ENCODE measurements at regions of chr1 and their contacts with region 1.

Region 1: GRCh38 chr1:212035123-212035834 is at the starts of genes DTL and INTS7:
- DNase-seq: peak; percentile 99
- H3K4me3 ChIP-seq: peak within 1 kb of the TSS; percentile 70 to 94 (median 78)
- H3K27ac ChIP-seq: peak within 1 kb of the TSS; percentile 71
- H3K4me1 ChIP-seq: peaks cover 36% of the 10 kb centered on the region
- H3K27me3 ChIP-seq: no peaks in the 10 kb centered on the region
- CTCF ChIP-seq: peak; percentile 90 to 95
- POLR2A ChIP-seq: peak; percentile 76
- total RNA-seq, gene DTL: 26.5 and 27.2 TPM in 2 replicates
- total RNA-seq, gene INTS7: 16.1 and 18.1 TPM in 2 replicates

Region 2: DNA sequence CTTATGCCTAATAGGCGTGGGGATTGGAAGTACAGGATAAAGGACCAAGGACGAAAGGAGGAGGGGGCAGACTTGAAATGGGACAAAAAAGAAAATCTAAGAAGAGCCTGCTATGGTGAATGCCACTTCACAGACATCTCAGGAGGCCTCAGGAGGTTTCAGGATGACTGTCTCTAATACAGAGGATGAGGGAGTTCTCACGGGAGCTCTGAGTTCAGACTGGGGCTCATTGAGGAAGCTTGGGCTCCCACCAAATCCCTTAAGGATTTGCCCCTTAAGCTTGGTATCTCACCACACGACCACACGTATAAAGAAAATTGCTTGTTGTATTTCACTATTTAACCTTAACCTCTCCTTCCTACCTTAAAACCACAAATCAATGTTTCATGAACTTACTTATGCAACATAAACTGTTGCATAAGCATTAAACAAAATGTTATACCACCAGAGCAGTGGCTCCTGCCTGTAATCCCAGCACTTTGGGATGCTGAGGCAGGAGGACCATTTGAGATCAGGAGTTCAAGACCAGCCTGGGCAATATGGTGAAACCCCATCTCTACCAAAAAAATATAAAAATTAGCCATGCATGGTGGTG is 468.8 kb before region 1 on chr1:
- CTCF ChIA-PET with region 1: no interaction called
- POLR2A ChIA-PET with region 1: no interaction called
- dilution Hi-C with region 1: no loop called
- intact Hi-C with region 1: no loop called
- DNase-seq: no peak
- H3K4me3 ChIP-seq: no peak overlapping the region
- H3K27ac ChIP-seq: no peak overlapping the region
- H3K4me1 ChIP-seq: no peaks in the 10 kb centered on the region
- H3K27me3 ChIP-seq: no peaks in the 10 kb centered on the region
- CTCF ChIP-seq: no peak
- POLR2A ChIP-seq: no peak

Region 3: GRCh38 chr1:211680752-211681327 is 354.4 kb before region 1 on chr1:
- CTCF ChIA-PET with region 1: interaction called, 148 read pairs
- POLR2A ChIA-PET with region 1: interaction called, 3 read pairs
- dilution Hi-C with region 1: no loop called
- intact Hi-C with region 1: loop called (anchors 1 kb)
- DNase-seq: peak; percentile 86
- H3K4me3 ChIP-seq: no peak overlapping the region
- H3K27ac ChIP-seq: no peak overlapping the region
- H3K4me1 ChIP-seq: peaks cover 3% of the 10 kb centered on the region
- H3K27me3 ChIP-seq: peaks cover 0 to 2% of the 10 kb centered on the region in 2 experiments
- CTCF ChIP-seq: peak; percentile 59 to 66
- POLR2A ChIP-seq: no peak

Region 4: GRCh38 chr1:211752951-211753486 is 282.3 kb before region 1 on chr1:
- CTCF ChIA-PET with region 1: no interaction called
- POLR2A ChIA-PET with region 1: no interaction called
- dilution Hi-C with region 1: no loop called
- intact Hi-C with region 1: no loop called
- DNase-seq: no peak
- H3K4me3 ChIP-seq: no peak overlapping the region
- H3K27ac ChIP-seq: no peak overlapping the region
- H3K4me1 ChIP-seq: no peaks in the 10 kb centered on the region
- H3K27me3 ChIP-seq: no peaks in the 10 kb centered on the region
- CTCF ChIP-seq: no peak
- POLR2A ChIP-seq: no peak

Region 5: GRCh38 chr1:211965108-211965805 is 70.0 kb before region 1 on chr1:
- CTCF ChIA-PET with region 1: interaction called, 3 read pairs
- POLR2A ChIA-PET with region 1: interaction called, 3 read pairs
- dilution Hi-C with region 1: no loop called
- intact Hi-C with region 1: loop called (anchors 1 kb)
- DNase-seq: no peak
- H3K4me3 ChIP-seq: no peak overlapping the region
- H3K27ac ChIP-seq: no peak overlapping the region
- H3K4me1 ChIP-seq: no peaks in the 10 kb centered on the region
- H3K27me3 ChIP-seq: no peaks in the 10 kb centered on the region
- CTCF ChIP-seq: no peak
- POLR2A ChIP-seq: no peak

Region 6: DNA sequence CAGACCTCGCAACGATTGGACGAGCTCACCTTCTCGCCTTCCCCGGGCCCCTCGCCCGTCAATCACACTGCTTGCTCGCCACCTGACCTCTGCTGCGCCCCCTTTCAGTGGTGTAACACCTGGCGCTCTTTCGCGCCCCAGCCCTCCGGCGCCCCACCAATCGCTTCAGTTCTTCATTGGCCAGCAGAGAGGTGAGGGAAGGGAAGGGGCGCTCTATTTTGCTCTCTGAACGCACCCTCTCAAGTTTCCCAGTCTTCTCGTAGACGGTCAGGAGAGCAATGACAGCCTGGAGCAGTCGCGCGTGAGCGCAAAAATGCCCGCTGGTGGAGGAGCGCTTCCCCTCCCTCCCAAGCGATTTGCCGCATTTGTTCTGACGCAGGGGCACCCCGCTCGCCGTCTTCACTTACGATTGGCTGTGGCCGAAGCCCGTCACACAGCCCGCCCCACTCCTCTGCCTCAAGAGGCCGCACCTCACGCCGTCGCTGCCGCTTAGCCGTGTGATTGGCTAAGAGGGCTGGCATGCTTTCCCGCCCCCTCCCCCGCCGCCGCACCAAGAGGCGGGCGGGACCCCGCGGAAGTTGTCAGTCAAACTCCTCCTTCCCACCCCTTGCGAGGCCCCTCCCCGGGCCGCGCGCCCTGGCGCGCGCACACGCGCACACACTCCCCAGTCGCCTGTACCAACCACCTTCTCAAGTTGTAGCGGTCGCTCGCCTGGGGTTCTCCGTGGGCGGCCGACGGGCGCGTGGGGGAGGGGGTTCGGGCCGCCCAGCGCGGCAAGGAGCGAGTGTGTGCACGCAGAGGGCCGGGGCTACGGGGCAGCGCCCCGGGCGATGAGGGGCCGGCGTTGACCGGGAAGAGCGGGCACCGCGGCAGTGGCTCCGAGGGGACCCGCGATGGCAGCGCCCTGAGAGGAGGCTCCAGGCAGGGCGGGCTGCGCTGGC is 249.7 kb after region 1 on chr1 and contains the start of gene PPP2R5A:
- CTCF ChIA-PET with region 1: interaction called, 6 read pairs
- POLR2A ChIA-PET with region 1: no interaction called
- dilution Hi-C with region 1: no loop called
- intact Hi-C with region 1: loop called (anchors 1 kb)
- DNase-seq: peak; percentile 100
- H3K4me3 ChIP-seq: peak within 1 kb of the TSS; percentile 63 to 86 (median 85)
- H3K27ac ChIP-seq: peak within 1 kb of the TSS; percentile 44
- H3K4me1 ChIP-seq: peaks cover 19% of the 10 kb centered on the region
- H3K27me3 ChIP-seq: no peaks in the 10 kb centered on the region
- CTCF ChIP-seq: peak in 1 of 2 donors; percentile 15
- POLR2A ChIP-seq: peak; percentile 53
- total RNA-seq, gene PPP2R5A: 27.7 and 34.5 TPM in 2 replicates

Region 7: GRCh38 chr1:212432706-212433576 is 397.7 kb after region 1 on chr1 and contains the start of gene NENF:
- CTCF ChIA-PET with region 1: no interaction called
- POLR2A ChIA-PET with region 1: no interaction called
- dilution Hi-C with region 1: no loop called
- intact Hi-C with region 1: loop called (anchors 1 kb)
- DNase-seq: peak; percentile 59
- H3K4me3 ChIP-seq: peak within 1 kb of the TSS; percentile 26 to 58 (median 53)
- H3K27ac ChIP-seq: no peak within 1 kb of the TSS
- H3K4me1 ChIP-seq: peaks cover 5% of the 10 kb centered on the region
- H3K27me3 ChIP-seq: peaks cover 12 to 14% of the 10 kb centered on the region in 2 experiments
- CTCF ChIP-seq: no peak
- POLR2A ChIP-seq: peak; percentile 78
- total RNA-seq, gene NENF: 20.5 and 23.0 TPM in 2 replicates

Region 8: GRCh38 chr1:213492161-213493041 is 1457.1 kb after region 1 on chr1:
- CTCF ChIA-PET with region 1: no interaction called
- POLR2A ChIA-PET with region 1: no interaction called
- dilution Hi-C with region 1: no loop called
- intact Hi-C with region 1: no loop called
- DNase-seq: no peak
- H3K4me3 ChIP-seq: no peak overlapping the region
- H3K27ac ChIP-seq: no peak overlapping the region
- H3K4me1 ChIP-seq: no peaks in the 10 kb centered on the region
- H3K27me3 ChIP-seq: no peaks in the 10 kb centered on the region
- CTCF ChIP-seq: no peak
- POLR2A ChIP-seq: no peak